ENCODE measurements at regions of chr7 and their contacts with region 1.

Region 1: DNA sequence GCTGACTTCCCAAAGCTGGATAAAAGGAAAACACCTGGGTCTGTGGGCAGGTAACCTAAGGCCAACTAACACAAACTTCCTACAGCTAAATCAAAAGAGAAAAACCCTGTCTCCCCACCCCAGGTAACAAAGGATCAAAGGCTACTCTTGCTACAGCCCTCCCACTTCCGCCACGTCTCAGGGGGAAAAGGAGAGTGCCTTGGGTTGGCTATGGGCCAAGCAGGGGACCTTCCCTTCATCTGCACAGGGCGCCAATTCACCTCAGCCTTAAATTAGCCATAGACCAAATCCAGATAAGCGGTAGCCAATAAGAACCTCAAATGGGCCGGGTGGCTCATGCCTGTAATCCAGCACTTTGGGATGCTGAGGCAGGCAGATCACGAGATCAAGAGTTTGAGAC is 69.1 kb upstream of the LANCL2 start:
- DNase-seq: no peak
- H3K4me3 ChIP-seq: no peak overlapping the region
- H3K27ac ChIP-seq: no peak overlapping the region
- H3K27me3 ChIP-seq: peaks cover 21% of the 10 kb centered on the region
- CTCF ChIP-seq: no peak

Region 2: GRCh38 chr7:55173671-55174070 is 122.4 kb before region 1 on chr7:
- CTCF ChIA-PET with region 1: no interaction called
- POLR2A ChIA-PET with region 1: interaction called, 10 read pairs
- DNase-seq: no peak
- H3K4me3 ChIP-seq: no peak overlapping the region
- H3K27ac ChIP-seq: no peak overlapping the region
- H3K27me3 ChIP-seq: no peaks in the 10 kb centered on the region
- CTCF ChIP-seq: no peak